Dendritic cell treated with granulocyte-macrophage colony-stimulating factor and Interleukin-4, amounts not matched to agents 40 ng/mL and 50 ng/mL, for 4 days (primary cell): ENCODE measurements at regions of chr3 and their contacts with region 1.

Region 1: DNA sequence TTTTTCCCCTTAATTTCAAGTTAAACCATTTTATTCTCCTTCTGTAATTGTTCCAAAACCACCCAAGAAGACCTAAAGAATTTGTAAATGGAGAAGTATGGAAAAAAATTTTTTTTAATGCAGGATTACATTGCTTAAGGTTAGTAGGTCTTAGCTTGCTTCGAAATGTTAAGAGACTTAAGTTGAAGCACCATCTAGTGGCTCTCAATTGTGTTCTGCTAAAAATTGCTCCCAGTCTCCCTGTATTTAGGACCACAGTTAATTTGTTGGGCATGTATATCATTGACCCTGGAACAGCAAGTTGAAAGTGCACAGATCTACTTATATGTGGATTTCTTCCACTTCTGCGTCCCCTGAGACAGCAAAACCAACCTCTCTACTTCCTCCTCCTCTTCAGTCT is 32.4 kb downstream of the CD200R1L start:
- H3K4me3 Mint-ChIP-seq: peak overlapping the region; percentile 30
- H3K27ac Mint-ChIP-seq: peak overlapping the region; percentile 94
- H3K4me1 Mint-ChIP-seq: peaks cover 84% of the 10 kb centered on the region
- H3K27me3 Mint-ChIP-seq: no peaks in the 10 kb centered on the region

Region 2: DNA sequence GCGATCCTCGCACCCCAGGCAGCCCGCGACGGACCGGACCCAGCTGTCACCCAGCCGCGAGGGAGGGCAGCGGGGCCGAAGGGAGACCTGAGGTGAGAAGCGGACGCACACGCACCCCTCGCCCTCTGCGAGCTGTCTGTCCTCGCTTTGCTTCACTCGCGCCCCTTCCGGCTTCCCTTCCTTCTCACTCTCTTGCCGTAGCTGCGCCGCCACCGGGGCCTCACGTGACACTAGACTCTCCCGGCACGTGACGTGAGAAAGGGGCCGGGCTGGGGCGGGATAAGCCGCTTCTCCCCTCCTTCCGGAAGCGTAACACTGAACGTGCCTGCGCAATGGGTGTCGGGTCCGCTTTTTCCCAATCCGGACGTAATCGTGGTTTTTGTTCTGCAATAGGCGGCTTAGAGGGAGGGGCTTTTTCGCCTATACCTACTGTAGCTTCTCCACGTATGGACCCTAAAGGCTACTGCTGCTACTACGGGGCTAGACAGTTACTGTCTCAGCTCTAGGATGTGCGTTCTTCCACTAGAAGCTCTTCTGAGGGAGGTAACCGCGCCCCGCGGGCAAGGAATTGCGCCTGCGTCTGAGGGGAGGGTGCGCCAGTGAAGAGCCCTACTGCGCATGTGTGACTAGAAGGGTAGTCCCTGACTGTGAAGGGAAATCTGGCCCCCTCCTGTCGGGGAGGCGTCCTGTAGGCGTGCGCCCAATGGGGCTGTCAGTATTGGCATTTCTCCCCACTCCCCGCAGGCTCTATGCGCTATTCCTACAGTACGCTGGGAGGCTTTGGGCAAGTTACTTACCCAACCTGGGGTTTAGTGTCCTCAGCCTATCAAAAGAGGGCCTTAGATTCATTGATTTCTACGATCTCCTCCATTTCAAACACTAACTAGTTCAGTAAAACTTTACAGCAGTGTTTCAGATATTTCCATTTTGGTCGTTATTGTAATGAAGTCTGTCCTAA is 252.3 kb before region 1 on chr3 and contains the starts of genes ATG3 and SLC35A5:
- intact Hi-C with region 1: loop called (anchors 5 kb)
- H3K4me3 Mint-ChIP-seq: peak within 1 kb of the TSS; percentile 89
- H3K27ac Mint-ChIP-seq: peak within 1 kb of the TSS; percentile 96
- H3K4me1 Mint-ChIP-seq: peaks cover 19% of the 10 kb centered on the region
- H3K27me3 Mint-ChIP-seq: no peaks in the 10 kb centered on the region

Region 3: GRCh38 chr3:112734718-112735350 is 79.4 kb before region 1 on chr3:
- intact Hi-C with region 1: loop called (anchors 5 kb)
- H3K4me3 Mint-ChIP-seq: no peak overlapping the region
- H3K27ac Mint-ChIP-seq: no peak overlapping the region
- H3K4me1 Mint-ChIP-seq: peaks cover 30% of the 10 kb centered on the region
- H3K27me3 Mint-ChIP-seq: no peaks in the 10 kb centered on the region

Region 4: GRCh38 chr3:112858410-112859069 is 44.3 kb after region 1 on chr3:
- intact Hi-C with region 1: loop called (anchors 2 kb)
- H3K4me3 Mint-ChIP-seq: peak overlapping the region; percentile 54
- H3K27ac Mint-ChIP-seq: peak overlapping the region; percentile 92
- H3K4me1 Mint-ChIP-seq: peaks cover 42% of the 10 kb centered on the region
- H3K27me3 Mint-ChIP-seq: no peaks in the 10 kb centered on the region

Region 5: GRCh38 chr3:112894258-112894657 is 80.0 kb after region 1 on chr3:
- intact Hi-C with region 1: no loop called
- H3K4me3 Mint-ChIP-seq: no peak overlapping the region
- H3K27ac Mint-ChIP-seq: no peak overlapping the region
- H3K4me1 Mint-ChIP-seq: peaks cover 11% of the 10 kb centered on the region
- H3K27me3 Mint-ChIP-seq: peaks cover 5% of the 10 kb centered on the region

Region 6: DNA sequence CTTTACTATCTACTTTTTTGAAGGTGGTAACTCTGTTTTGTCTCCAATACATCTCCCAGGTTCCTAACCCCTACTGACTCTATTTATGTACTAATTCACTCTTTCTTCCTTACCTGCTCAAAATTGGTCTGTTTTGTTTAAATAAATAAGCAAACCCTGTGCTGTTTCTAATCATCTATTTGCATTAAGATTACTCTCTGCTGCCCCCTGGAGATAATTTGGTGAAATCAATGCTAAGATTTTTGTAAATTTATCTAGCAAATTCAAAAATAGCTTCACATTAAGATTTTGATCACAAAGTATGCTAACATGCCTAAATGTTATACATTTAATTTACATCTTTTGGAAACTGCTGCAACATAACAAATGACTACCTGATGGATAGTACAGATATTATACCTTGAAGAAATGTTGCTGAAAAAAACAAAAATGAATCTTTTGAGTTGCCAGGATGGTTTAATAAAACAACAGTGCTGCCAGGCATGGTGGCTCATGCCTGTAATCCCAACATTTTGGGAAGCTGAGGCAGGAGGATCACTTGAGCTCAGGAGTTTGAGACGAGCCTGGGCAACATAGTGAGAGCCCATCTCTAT is 165.1 kb after region 1 on chr3:
- intact Hi-C with region 1: loop called (anchors 5 kb)
- H3K4me3 Mint-ChIP-seq: no peak overlapping the region
- H3K27ac Mint-ChIP-seq: no peak overlapping the region
- H3K4me1 Mint-ChIP-seq: peaks cover 59% of the 10 kb centered on the region
- H3K27me3 Mint-ChIP-seq: no peaks in the 10 kb centered on the region